Heart right ventricle (tissue), 16 donors: ENCODE measurements at regions of chr6 and their contacts with region 1.

Region 1: GRCh38 chr6:12289933-12290820 is at the start of gene EDN1:
- DNase-seq: peak; percentile 68 to 72
- ATAC-seq: peak; percentile 79 to 94 (median 90)
- H3K4me3 ChIP-seq: peak within 1 kb of the TSS; percentile 29 to 62 (median 54)
- H3K27ac ChIP-seq: peak within 1 kb of the TSS in 9 of 10 donors; percentile 6 to 75 (median 52)
- H3K4me1 ChIP-seq: peaks cover 0 to 34% (median 15%) of the 10 kb centered on the region in 9 donors
- H3K27me3 ChIP-seq: peaks cover 0 to 38% (median 15%) of the 10 kb centered on the region in 7 donors
- CTCF ChIP-seq: peak; percentile 10 to 65 (median 55)
- total RNA-seq, gene EDN1: 0.36 to 6.3 (median 3.3) TPM

Region 2: GRCh38 chr6:11585426-11586016 is 704.7 kb before region 1 on chr6:
- intact Hi-C with region 1: loop called in 4 of 10 experiments (anchors 5 to 10 kb)
- DNase-seq: no peak
- ATAC-seq: peak in 1 of 8 donors; percentile 34
- H3K4me3 ChIP-seq: no peak overlapping the region
- H3K27ac ChIP-seq: no peak overlapping the region
- H3K4me1 ChIP-seq: peaks cover 0 to 13% (median 0%) of the 10 kb centered on the region in 9 donors
- H3K27me3 ChIP-seq: no peaks in the 10 kb centered on the region
- CTCF ChIP-seq: peak; percentile 20 to 83 (median 67)

Region 3: DNA sequence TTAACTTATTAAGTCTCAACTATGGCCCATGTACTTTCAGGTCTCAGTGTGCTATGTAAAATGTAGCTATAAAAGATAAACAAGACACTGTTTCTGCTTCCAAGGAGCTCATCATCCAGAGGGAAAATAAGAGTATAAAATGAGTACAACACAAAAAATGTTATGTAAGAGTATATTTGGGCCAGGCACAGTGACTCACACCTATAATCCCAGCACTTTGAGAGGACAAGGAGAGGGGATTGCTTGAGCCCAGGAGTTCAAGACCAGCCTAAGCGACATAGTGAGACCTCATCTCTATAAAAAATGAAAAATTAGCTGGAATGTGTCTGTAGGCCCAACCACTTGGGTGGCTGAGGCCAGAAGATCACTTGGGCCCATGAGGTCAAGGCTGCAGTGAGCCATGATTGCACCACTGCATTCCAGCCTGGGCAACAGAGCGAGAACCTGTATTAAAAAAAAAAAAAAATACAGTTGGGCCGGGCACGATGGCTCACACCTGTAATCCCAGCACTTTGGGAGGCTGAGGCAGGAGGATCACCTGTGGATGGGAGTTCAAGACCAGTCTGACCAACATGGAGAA is 124.0 kb after region 1 on chr6:
- intact Hi-C with region 1: loop called in 2 of 10 experiments (anchors 5 to 10 kb)
- DNase-seq: no peak
- ATAC-seq: no peak
- H3K4me3 ChIP-seq: no peak overlapping the region
- H3K27ac ChIP-seq: no peak overlapping the region
- H3K4me1 ChIP-seq: peaks cover 0 to 15% (median 0%) of the 10 kb centered on the region in 9 donors
- H3K27me3 ChIP-seq: no peaks in the 10 kb centered on the region
- CTCF ChIP-seq: no peak

Region 4: DNA sequence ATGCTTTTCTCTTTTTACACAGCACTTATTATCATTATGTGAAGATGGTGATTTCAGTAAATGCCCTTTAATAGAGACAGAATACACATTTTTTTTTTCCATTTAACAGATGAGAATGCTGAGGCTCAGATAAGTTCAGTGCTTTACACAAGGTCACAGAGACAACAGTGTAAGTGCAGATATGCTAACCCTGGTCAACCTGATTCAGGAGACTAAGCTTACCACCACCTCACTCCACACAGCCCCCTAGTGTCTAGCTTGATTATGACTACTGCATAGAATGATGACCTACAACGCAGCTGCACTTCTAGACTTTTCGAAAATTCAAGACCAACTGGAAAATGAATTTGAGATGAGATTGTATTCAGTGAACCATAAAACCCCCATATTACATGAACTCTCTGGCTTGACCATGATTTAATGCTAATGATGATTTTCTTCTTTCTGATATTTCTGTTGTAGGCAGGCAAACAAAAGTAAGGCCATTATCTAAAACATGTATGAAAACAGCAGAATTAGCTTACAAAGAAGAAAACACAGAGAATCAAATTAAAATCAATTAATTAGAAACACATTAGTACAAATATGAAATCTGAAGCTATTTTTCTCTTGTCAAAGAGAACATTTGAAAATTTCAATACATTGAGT is 214.3 kb after region 1 on chr6:
- intact Hi-C with region 1: loop called in 1 of 10 experiments (anchors 10 kb)
- DNase-seq: no peak
- ATAC-seq: no peak
- H3K4me3 ChIP-seq: no peak overlapping the region
- H3K27ac ChIP-seq: no peak overlapping the region
- H3K4me1 ChIP-seq: no peaks in the 10 kb centered on the region
- H3K27me3 ChIP-seq: no peaks in the 10 kb centered on the region
- CTCF ChIP-seq: peak in 6 of 9 donors; percentile 4 to 46 (median 23)

Region 5: GRCh38 chr6:12637960-12638641 is 347.9 kb after region 1 on chr6:
- intact Hi-C with region 1: no loop called
- DNase-seq: peak; percentile 14 to 31
- ATAC-seq: peak in 5 of 8 donors; percentile 35 to 60 (median 56)
- H3K4me3 ChIP-seq: no peak overlapping the region
- H3K27ac ChIP-seq: no peak overlapping the region
- H3K4me1 ChIP-seq: peaks cover 0 to 4% (median 0%) of the 10 kb centered on the region in 9 donors
- H3K27me3 ChIP-seq: peaks cover 0 to 9% (median 0%) of the 10 kb centered on the region in 7 donors
- CTCF ChIP-seq: peak in 8 of 9 donors; percentile 20 to 77 (median 62)

Region 6: GRCh38 chr6:12890171-12890790 is 600.1 kb after region 1 on chr6:
- intact Hi-C with region 1: loop called in 1 of 10 experiments (anchors 10 kb)
- DNase-seq: no peak
- ATAC-seq: no peak
- H3K4me3 ChIP-seq: no peak overlapping the region
- H3K27ac ChIP-seq: no peak overlapping the region
- H3K4me1 ChIP-seq: peaks cover 0 to 20% (median 7%) of the 10 kb centered on the region in 9 donors
- H3K27me3 ChIP-seq: no peaks in the 10 kb centered on the region
- CTCF ChIP-seq: peak in 7 of 9 donors; percentile 12 to 50 (median 34)